ENCODE measurements at regions of chr18 and their contacts with region 1.

Region 1: DNA sequence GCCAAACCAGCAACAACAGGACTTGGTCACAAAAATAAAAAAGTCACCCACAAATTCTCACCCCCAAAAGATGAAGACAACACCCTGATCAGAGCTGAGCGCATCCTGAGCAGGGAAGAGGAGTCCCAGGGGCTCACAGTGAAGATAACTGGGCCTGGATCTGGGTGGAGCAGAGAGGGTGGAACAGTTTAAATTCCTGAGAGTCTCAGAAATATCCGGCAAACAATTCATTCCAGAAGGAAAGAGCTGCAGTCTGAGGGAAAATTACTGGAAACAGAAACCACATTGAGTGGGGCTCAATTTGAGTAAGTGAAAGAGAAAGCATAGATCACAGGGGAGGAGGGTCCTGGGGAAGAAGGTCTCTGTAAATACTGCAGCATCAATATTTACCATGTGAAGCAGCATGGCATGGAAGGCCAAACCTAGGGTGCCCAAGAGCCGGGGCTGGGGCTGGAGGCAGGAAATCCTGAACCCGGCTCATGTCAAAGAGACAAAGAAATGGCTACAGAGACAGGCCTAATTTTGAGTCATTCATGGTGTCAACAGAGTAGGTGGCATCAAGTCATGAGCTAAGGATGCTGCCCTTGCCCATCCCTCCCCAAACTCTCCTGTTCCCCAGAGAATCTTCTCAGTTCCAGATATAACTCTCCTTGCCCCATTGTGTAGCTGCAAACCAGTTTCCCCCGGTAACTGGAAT is 61.4 kb upstream of the ZBTB7C start:
- DNase-seq: no peak
- ATAC-seq: no peak
- H3K4me3 Mint-ChIP-seq: no peak overlapping the region
- H3K27ac Mint-ChIP-seq: no peak overlapping the region
- H3K4me1 Mint-ChIP-seq: no peaks in the 10 kb centered on the region
- H3K27me3 Mint-ChIP-seq: peaks cover 10% of the 10 kb centered on the region
- CTCF ChIP-seq: no peak

Region 2: DNA sequence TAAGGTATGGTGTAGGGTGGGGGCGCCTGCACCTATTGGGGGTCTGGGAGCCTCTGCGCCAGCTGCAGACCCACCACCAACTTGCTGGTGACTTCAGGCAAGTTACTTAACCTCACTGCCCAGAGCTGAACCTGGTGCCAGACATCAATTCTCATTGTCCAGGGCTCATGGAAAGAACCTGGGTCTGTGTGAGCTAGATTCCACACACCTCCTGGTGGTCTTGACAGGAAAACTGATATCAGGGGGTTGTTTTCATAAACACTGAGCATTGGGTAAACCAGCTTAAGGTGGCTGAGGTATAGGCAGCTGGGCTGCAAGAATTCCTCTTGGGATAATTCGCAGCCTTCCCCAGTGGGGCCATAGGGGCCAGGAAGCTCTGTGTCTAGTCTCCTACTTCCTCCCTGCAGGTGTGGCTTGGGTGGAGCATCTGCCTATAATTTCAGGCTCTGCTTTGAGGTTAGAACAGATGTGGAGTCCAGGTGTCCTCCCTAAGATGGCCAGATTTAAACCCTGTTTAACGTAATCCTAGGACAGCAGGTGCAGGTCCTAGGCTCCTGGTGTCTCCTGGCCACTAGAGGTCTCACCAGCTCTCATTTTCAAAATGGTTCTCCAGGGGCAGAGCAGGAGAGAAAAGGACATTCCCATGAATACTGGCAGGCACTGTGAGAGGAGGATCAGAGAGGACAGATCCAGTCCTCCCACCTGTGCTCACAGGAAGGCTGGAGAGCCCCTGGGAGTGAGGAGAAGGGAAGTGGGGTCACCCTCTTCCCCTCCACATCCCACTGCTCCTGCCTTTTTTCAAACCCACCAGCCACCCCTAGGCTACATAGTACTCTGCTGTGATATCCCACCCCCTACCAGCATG is 439.8 kb before region 1 on chr18:
- CTCF ChIA-PET with region 1: no interaction called
- POLR2A ChIA-PET with region 1: interaction called, 11 read pairs
- DNase-seq: peak; percentile 59
- ATAC-seq: peak; percentile 91
- H3K4me3 Mint-ChIP-seq: no peak overlapping the region
- H3K27ac Mint-ChIP-seq: no peak overlapping the region
- H3K4me1 Mint-ChIP-seq: peaks cover 19% of the 10 kb centered on the region
- H3K27me3 Mint-ChIP-seq: no peaks in the 10 kb centered on the region
- CTCF ChIP-seq: peak; percentile 42; the same call in 1 of the 2 replicates